HCT116 (cell line): ENCODE measurements at regions of chr2 and their contacts with region 1.

Region 1: DNA sequence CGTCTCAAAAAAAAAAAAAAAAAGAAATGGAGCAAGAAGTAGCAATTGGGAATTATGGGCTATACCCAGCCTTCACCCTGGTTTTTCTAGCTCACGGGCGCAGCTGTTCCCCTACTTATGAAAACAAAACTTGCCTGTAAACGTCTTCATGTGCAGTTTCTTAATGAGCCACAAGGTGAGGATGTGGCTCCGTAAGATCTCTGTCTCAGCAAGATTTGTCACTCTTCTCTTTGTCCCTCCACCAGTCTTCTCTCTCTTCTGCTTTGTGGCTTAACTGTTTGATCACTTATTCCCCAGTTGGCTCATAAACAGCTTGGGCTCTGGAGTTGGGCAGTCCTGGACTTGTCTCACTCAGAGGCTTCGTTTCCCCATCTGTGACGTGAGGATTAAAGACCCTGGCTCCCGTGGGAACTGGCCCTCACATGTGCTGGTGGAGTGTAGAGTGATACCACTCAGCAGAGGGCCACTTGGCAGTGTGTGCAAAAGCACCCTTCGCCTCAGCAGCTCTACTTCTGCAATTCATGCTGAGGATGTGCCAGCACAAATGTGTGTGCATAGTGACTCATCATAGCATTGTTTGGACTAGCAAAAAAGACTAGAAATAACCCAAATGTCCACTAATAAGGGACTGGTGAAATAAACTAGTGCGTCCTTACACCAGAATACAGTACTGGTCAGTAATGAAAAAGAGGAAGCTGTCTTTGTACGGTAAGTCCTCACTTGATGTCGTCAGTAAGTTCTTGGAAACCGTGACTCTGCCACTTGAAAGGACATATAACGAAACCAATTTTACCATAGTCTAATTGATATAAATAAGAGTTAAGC is 8.7 kb downstream of the CEP68 start:
- DNase-seq: no peak
- ATAC-seq: peak; percentile 68
- H3K4me3 ChIP-seq: no peak overlapping the region
- H3K27ac ChIP-seq: peak overlapping the region; percentile 37
- H3K4me1 ChIP-seq: peaks cover 26 to 42% of the 10 kb centered on the region in 2 experiments
- H3K27me3 ChIP-seq: no peaks in the 10 kb centered on the region
- CTCF ChIP-seq: peak; percentile 60 to 76 (median 69); a peak in 5 of 6 replicates
- POLR2A ChIP-seq: no peak
- RAD21 ChIP-seq: peak; percentile 85

Region 2: GRCh38 chr2:65165558-65165957 is 100.6 kb after region 1 on chr2:
- CTCF ChIA-PET with region 1: interaction called, 19 read pairs
- POLR2A ChIA-PET with region 1: interaction called, 3 read pairs
- RAD21 ChIA-PET with region 1: interaction called, 3 to 5 read pairs
- intact Hi-C with region 1: loop called (anchors 1 kb)
- DNase-seq: no peak
- ATAC-seq: no peak
- H3K4me3 ChIP-seq: no peak overlapping the region
- H3K27ac ChIP-seq: no peak overlapping the region
- H3K4me1 ChIP-seq: peaks cover 4 to 22% of the 10 kb centered on the region in 2 experiments; a peak in 3 of 4 replicates
- H3K27me3 ChIP-seq: no peaks in the 10 kb centered on the region
- CTCF ChIP-seq: no peak
- POLR2A ChIP-seq: no peak
- RAD21 ChIP-seq: no peak

Region 3: DNA sequence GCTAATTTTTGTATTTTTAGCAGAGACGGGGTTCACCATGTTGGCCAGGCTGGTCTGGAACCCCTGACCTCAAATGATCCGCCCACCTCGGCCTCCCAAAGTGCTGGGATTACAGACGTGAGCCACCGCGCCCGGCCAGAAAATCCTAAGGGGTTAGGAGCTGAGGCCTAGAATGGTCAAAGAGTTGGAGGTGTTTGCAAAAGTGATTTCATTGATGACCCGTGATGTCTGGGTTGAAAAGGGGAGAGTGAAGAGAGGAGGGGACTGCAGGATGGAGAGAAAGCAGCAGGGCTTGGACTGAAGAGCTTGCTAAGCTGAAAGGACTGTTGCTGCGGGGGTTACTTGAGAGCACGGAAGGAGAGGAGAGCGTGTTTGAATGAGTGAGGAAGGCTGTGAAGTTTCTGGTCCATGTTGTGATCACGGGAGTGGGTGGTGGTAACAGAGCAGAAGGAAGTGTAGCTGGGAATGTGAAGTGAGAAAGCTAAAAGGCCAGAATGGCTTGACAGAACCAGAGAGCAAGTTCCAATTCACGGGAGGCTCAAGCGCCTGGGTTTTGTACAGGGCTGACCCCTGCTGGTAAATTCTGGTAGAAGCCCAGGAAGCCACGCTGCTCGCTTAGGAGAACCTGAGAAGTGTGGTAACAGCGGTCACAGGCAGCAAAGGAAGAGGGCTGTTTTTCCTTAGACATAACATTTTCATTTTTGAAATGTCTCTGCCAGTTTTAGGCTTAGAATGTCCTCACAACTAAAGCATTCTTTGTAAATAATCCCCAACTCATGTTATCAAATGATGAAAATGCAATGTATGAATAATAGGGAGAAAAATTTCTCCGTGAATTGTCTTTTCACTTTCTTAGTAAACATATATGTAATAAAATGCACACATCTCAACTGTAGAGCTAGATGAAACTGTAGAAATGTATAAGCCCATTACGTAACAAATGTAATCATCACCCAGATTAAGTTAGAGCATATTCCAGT is 122.2 kb after region 1 on chr2:
- CTCF ChIA-PET with region 1: interaction called, 10 read pairs
- POLR2A ChIA-PET with region 1: no interaction called
- RAD21 ChIA-PET with region 1: no interaction called
- intact Hi-C with region 1: loop called (anchors 2 kb)
- DNase-seq: peak; percentile 43
- ATAC-seq: peak; percentile 99
- H3K4me3 ChIP-seq: no peak overlapping the region
- H3K27ac ChIP-seq: no peak overlapping the region
- H3K4me1 ChIP-seq: peaks cover 0 to 4% of the 10 kb centered on the region in 2 experiments; a peak in 1 of 4 replicates
- H3K27me3 ChIP-seq: no peaks in the 10 kb centered on the region
- CTCF ChIP-seq: peak; percentile 59 to 84 (median 83); a peak in 5 of 6 replicates
- POLR2A ChIP-seq: no peak
- RAD21 ChIP-seq: peak; percentile 85